Naive thymus-derived CD4-positive, alpha-beta T cell (primary cell): ENCODE measurements at regions of chr14 and their contacts with region 1.

Region 1: GRCh38 chr14:50003213-50004031 is 110.5 kb downstream of the ARF6 start:
- DNase-seq: peak; percentile 63 to 84 (median 69)
- ATAC-seq: peak; percentile 62
- H3K4me3 ChIP-seq: peak overlapping the region; percentile 64
- H3K4me3 Mint-ChIP-seq: peak overlapping the region; percentile 74 to 95 (median 90)
- H3K27ac ChIP-seq: peak overlapping the region; percentile 90
- H3K27ac Mint-ChIP-seq: peak overlapping the region; percentile 90 to 99 (median 98)
- H3K4me1 ChIP-seq: peaks cover 47 to 48% of the 10 kb centered on the region in 2 donors
- H3K4me1 Mint-ChIP-seq: peaks cover 40 to 71% (median 63%) of the 10 kb centered on the region in 7 donors
- H3K27me3 ChIP-seq: no peaks in the 10 kb centered on the region
- H3K27me3 Mint-ChIP-seq: no peaks in the 10 kb centered on the region

Region 2: DNA sequence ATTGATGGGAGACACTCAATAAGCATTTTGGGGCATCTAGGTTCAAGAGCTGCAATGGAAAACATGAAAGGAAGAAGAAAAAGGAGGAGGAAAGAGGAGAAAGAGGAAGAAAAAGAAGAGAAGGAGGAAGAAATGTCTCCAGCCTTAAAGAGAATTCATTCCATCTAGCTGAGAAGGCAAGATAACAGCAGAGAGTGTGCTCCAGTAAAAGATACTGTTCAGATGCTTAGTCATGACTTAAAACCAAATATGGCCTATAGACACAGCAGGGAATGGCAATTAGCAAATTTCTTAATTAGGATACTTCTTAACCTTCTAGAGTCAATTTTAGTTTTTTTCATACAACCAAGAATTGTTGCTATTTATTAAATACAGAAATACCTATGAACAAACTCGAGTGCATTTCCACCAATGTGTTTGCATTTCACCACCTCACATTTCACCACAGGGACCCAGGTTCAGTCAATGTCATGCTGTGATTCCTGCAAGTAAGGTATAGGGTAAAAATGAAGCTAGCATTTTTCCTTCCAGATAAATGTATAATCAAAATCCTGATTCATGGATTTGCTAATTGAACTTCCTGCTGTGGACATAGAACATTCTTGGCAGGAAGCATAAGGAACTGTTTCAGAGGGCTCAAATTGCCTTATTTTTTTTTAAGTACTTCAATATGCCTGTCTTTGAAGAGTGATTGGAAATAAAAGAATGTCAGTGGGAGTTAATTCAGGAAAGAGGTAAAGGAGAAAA is 595.1 kb before region 1 on chr14:
- CTCF ChIA-PET with region 1: no interaction called
- POLR2A ChIA-PET with region 1: no interaction called
- intact Hi-C with region 1: no loop called
- DNase-seq: no peak
- ATAC-seq: no peak
- H3K4me3 ChIP-seq: no peak overlapping the region
- H3K4me3 Mint-ChIP-seq: no peak overlapping the region
- H3K27ac ChIP-seq: no peak overlapping the region
- H3K27ac Mint-ChIP-seq: no peak overlapping the region
- H3K4me1 ChIP-seq: no peaks in the 10 kb centered on the region
- H3K4me1 Mint-ChIP-seq: no peaks in the 10 kb centered on the region
- H3K27me3 ChIP-seq: no peaks in the 10 kb centered on the region
- H3K27me3 Mint-ChIP-seq: peaks cover 0 to 33% (median 25%) of the 10 kb centered on the region in 5 donors

Region 3: DNA sequence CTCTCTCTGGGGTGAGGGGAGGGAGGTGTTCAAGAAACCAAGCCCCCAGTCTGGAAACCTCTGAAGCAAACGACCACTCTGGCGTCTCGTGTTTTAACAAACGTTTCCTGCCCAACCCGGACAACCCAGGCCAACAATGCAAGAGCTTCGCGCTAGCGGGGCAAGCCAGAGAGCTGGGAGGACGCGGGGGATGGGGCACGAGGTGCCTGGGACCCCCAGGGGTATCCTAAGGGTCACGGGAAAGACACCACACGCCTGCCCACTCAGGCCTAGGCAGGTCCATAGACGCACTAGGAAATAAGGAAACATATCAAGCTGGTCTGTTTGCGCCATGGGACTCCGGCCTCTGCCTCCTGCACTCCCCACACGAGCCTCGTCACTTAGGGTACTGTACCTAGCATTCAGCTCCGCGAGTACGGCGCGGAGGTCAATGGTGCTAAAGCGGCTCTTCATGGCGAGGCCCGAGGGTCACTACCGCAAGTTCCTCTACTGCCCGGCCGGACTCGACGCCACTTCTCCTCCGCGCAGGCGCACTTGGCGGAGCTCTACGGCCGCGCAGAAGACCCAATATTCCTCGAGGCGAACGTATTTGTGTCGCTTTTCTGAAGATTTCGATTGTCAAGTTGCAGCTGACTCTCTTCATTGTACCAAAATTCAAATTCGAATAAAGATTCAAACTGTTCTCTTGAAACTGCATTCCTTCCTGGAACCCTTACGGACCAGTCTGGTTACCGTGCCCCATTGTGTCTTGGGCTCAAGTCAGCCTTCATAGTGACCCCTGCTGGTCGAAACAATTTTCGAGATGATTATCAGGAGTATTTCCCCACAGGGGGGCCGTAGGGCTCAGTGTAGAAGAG is 150.9 kb before region 1 on chr14 and contains the start of gene NEMF:
- CTCF ChIA-PET with region 1: interaction called, 9 read pairs
- POLR2A ChIA-PET with region 1: interaction called, 11 read pairs
- intact Hi-C with region 1: no loop called
- DNase-seq: peak; percentile 67 to 81 (median 78)
- ATAC-seq: peak; percentile 90
- H3K4me3 ChIP-seq: peak within 1 kb of the TSS; percentile 86
- H3K4me3 Mint-ChIP-seq: peak within 1 kb of the TSS; percentile 93 to 100 (median 96)
- H3K27ac ChIP-seq: peak within 1 kb of the TSS; percentile 87
- H3K27ac Mint-ChIP-seq: peak within 1 kb of the TSS; percentile 94 to 99 (median 97)
- H3K4me1 ChIP-seq: peaks cover 17 to 31% of the 10 kb centered on the region in 2 donors
- H3K4me1 Mint-ChIP-seq: peaks cover 26 to 49% (median 43%) of the 10 kb centered on the region in 7 donors
- H3K27me3 ChIP-seq: no peaks in the 10 kb centered on the region
- H3K27me3 Mint-ChIP-seq: no peaks in the 10 kb centered on the region
- total RNA-seq, gene NEMF: 88.6 to 127 (median 105) TPM

Region 4: GRCh38 chr14:49892636-49893308 is 110.7 kb before region 1 on chr14 and contains the start of gene ARF6:
- CTCF ChIA-PET with region 1: interaction called, 5 read pairs
- POLR2A ChIA-PET with region 1: interaction called, 52 read pairs
- intact Hi-C with region 1: loop called (anchors 1 kb)
- DNase-seq: peak; percentile 85 to 98 (median 89)
- ATAC-seq: peak; percentile 93
- H3K4me3 ChIP-seq: peak within 1 kb of the TSS; percentile 68
- H3K4me3 Mint-ChIP-seq: peak within 1 kb of the TSS; percentile 95 to 100 (median 98)
- H3K27ac ChIP-seq: peak within 1 kb of the TSS; percentile 97
- H3K27ac Mint-ChIP-seq: peak within 1 kb of the TSS; percentile 98 to 100 (median 99)
- H3K4me1 ChIP-seq: peaks cover 10 to 18% of the 10 kb centered on the region in 2 donors
- H3K4me1 Mint-ChIP-seq: peaks cover 21 to 42% (median 40%) of the 10 kb centered on the region in 7 donors
- H3K27me3 ChIP-seq: no peaks in the 10 kb centered on the region
- H3K27me3 Mint-ChIP-seq: no peaks in the 10 kb centered on the region
- total RNA-seq, gene ARF6: 61.9 to 173 (median 77.6) TPM

Region 5: DNA sequence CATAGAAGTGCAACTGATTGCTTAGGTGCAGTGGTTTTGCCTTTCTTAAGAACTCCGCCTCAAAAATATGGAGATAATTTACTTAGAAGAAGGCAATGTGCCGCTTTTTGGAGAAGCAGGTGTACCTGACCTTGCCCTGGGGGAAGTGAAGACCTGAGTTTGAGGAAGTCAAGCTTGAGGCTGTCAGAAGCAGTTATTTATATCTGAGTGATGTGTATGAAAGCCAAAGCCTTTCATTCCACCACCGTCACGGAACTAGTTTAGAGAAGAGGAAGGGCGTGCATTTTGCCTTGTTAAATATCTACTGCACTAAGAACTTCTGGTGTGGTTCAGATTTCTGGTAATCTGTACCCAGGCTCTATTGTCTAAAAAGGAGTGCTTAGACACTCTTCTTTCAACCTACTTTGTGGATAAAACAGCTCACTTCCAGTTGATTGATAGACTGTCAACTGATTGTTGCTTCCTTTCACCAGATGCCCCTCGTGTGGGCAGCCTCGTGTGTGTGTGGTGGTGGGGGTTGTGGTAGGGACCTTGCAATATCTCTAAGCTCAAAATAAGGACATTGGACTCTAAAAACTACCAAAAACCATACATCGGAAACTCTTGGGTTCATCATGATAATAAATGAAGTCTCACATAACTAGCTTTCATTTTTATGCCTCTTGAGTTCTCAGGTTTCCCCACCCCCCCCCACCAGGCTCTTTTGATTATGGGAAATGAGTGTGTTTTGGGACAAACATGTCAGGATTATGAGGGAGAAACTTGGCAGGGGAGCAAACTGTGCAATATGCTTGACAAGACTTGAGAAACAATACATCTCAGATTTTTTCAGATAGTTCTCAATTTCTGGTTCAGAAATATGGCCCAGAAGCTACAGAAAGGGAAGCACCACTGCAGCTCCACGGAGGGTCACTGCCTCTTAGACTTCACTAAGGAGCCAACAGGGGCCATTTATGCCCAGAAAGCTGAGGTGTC is 32.0 kb before region 1 on chr14:
- CTCF ChIA-PET with region 1: interaction called, 39 read pairs
- POLR2A ChIA-PET with region 1: interaction called, 188 read pairs
- intact Hi-C with region 1: loop called (anchors 1 kb)
- DNase-seq: peak in 8 of 9 donors; percentile 59 to 94 (median 90)
- ATAC-seq: peak; percentile 92
- H3K4me3 ChIP-seq: peak overlapping the region; percentile 40
- H3K4me3 Mint-ChIP-seq: peak overlapping the region; percentile 75 to 96 (median 86)
- H3K27ac ChIP-seq: peak overlapping the region; percentile 74
- H3K27ac Mint-ChIP-seq: peak overlapping the region; percentile 96 to 99 (median 99)
- H3K4me1 ChIP-seq: peaks cover 35 to 49% of the 10 kb centered on the region in 2 donors
- H3K4me1 Mint-ChIP-seq: peaks cover 32 to 88% (median 63%) of the 10 kb centered on the region in 7 donors
- H3K27me3 ChIP-seq: no peaks in the 10 kb centered on the region
- H3K27me3 Mint-ChIP-seq: no peaks in the 10 kb centered on the region

Region 6: DNA sequence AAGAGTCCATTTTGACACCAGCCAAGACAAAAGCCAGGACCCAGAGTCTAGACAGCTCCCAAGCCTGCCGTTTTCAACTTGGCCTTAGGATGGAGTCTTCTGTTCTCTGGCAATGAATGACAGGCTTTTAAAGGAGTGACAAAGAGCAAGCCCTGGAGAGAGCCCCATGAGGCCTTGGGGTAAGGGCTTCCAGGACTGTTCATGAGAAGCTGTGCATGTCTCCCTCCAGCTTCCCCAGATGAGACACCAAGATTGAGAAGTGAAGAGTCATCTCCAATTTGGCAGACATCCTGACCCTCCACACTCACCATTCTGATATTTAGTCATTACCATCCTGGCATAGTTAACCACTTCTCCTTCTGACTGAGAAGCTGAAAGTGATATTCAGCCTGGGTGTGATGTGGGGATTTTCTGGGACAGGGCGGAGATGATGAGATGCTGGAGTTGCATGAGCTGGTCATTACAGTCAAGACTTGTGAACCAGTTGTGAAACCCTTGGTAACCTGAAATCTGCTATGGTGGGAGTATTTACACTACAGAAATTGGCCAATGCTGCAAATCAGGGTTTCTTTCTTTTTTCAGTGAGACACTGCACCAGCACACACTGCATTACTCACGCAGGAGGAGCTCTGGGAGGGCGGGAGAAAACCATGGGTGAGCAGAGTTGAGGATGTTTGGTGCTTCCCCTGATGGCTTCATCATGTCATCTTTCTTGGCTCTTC is 35.1 kb after region 1 on chr14:
- CTCF ChIA-PET with region 1: interaction called, 3 read pairs
- POLR2A ChIA-PET with region 1: interaction called, 46 read pairs
- intact Hi-C with region 1: loop called (anchors 1 kb)
- DNase-seq: peak in 1 of 9 donors; percentile 69
- ATAC-seq: peak; percentile 79
- H3K4me3 ChIP-seq: no peak overlapping the region
- H3K4me3 Mint-ChIP-seq: peak overlapping the region in 3 of 10 donors; percentile 40 to 59 (median 53)
- H3K27ac ChIP-seq: no peak overlapping the region
- H3K27ac Mint-ChIP-seq: peak overlapping the region in 8 of 9 donors; percentile 36 to 95 (median 83)
- H3K4me1 ChIP-seq: peaks cover 46 to 52% of the 10 kb centered on the region in 2 donors
- H3K4me1 Mint-ChIP-seq: peaks cover 33 to 68% (median 54%) of the 10 kb centered on the region in 7 donors
- H3K27me3 ChIP-seq: no peaks in the 10 kb centered on the region
- H3K27me3 Mint-ChIP-seq: no peaks in the 10 kb centered on the region

Region 7: DNA sequence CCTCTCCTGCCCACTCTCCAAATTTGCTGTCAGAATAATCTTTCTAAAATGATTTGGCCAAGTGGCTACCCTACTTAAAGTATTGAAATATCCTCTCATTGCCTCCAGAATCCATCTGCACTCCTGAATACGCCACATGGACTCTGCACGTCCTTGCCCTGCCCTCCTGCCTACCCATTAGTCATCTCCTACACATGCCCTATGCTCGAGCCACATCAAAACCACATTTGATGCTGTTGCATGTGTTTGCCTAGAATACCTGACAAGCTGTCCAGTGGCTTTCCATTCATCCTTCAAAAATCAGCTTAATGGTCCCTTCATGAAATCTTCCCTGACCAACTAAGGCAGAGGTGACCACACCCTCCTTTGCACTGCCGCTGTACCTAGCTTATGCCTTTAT is 95.9 kb after region 1 on chr14:
- CTCF ChIA-PET with region 1: no interaction called
- POLR2A ChIA-PET with region 1: interaction called, 20 read pairs
- intact Hi-C with region 1: loop called in 1 of 2 experiments (anchors 2 kb)
- DNase-seq: no peak
- ATAC-seq: no peak
- H3K4me3 ChIP-seq: no peak overlapping the region
- H3K4me3 Mint-ChIP-seq: peak overlapping the region in 9 of 10 donors; percentile 9 to 61 (median 38)
- H3K27ac ChIP-seq: no peak overlapping the region
- H3K27ac Mint-ChIP-seq: peak overlapping the region; percentile 13 to 87 (median 79)
- H3K4me1 ChIP-seq: peaks cover 23 to 67% of the 10 kb centered on the region in 2 donors
- H3K4me1 Mint-ChIP-seq: peaks cover 39 to 92% (median 76%) of the 10 kb centered on the region in 7 donors
- H3K27me3 ChIP-seq: no peaks in the 10 kb centered on the region
- H3K27me3 Mint-ChIP-seq: peaks cover 0 to 5% (median 0%) of the 10 kb centered on the region in 5 donors

Region 8: DNA sequence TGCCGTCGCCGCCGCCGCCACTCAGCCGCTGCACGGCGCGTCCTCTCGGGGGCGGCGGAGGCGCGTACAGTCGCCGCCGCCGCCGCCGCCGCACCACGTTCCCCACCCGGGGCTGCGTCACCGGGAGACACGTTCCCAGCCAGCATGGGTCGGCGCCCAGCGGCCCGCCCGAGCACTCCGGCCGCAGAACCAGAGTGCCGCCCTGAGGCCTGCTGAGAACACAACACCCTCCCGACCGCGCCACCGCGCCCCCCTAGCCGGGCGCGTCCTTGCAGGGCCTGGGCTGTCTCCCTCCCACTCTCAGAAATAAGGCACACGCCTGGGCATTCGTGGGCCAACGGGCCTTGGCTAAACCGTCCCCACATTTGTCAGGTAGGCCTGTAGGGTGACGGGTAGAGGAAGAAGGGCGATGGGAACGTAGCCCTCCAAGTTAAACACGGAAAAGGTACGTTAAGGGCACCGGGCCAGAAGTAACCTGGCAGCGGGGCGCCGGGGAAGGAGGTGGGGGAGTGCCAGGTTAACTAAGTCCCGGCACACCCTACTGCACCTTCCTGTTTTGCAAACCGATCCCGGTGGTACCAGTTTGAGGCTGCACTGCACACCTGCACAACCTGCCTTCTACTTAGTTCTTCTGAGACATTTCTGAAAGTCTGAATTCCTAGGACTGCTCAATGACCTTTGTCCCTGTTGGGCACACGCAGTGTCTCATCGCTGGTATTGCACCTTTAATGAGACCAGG is 529.2 kb after region 1 on chr14 and contains the start of gene MAP4K5:
- CTCF ChIA-PET with region 1: no interaction called
- POLR2A ChIA-PET with region 1: no interaction called
- intact Hi-C with region 1: loop called in 1 of 2 experiments (anchors 2 kb)
- DNase-seq: peak; percentile 76 to 90 (median 85)
- ATAC-seq: peak; percentile 97
- H3K4me3 ChIP-seq: peak within 1 kb of the TSS; percentile 50
- H3K4me3 Mint-ChIP-seq: peak within 1 kb of the TSS; percentile 82 to 93 (median 91)
- H3K27ac ChIP-seq: peak within 1 kb of the TSS; percentile 78
- H3K27ac Mint-ChIP-seq: peak within 1 kb of the TSS; percentile 64 to 96 (median 89)
- H3K4me1 ChIP-seq: peaks cover 16 to 24% of the 10 kb centered on the region in 2 donors
- H3K4me1 Mint-ChIP-seq: peaks cover 36 to 59% (median 46%) of the 10 kb centered on the region in 7 donors
- H3K27me3 ChIP-seq: no peaks in the 10 kb centered on the region
- H3K27me3 Mint-ChIP-seq: peaks cover 0 to 21% (median 0%) of the 10 kb centered on the region in 5 donors
- total RNA-seq, gene MAP4K5: 30.0 to 47.5 (median 35.1) TPM